Activated CD4-positive, alpha-beta T cell treated with anti-CD3 and anti-CD28 coated beads for 36 hours (primary cell): ENCODE measurements at regions of chr15 and their contacts with region 1.

Region 1: GRCh38 chr15:55434989-55435825 is 26.9 kb downstream of the PIERCE2 start:
- DNase-seq: peak; percentile 8
- ATAC-seq: peak; percentile 66
- H3K4me3 Mint-ChIP-seq: no peak overlapping the region
- H3K27ac Mint-ChIP-seq: no peak overlapping the region
- H3K4me1 Mint-ChIP-seq: peaks cover 3% of the 10 kb centered on the region
- H3K27me3 Mint-ChIP-seq: no peaks in the 10 kb centered on the region

Region 2: DNA sequence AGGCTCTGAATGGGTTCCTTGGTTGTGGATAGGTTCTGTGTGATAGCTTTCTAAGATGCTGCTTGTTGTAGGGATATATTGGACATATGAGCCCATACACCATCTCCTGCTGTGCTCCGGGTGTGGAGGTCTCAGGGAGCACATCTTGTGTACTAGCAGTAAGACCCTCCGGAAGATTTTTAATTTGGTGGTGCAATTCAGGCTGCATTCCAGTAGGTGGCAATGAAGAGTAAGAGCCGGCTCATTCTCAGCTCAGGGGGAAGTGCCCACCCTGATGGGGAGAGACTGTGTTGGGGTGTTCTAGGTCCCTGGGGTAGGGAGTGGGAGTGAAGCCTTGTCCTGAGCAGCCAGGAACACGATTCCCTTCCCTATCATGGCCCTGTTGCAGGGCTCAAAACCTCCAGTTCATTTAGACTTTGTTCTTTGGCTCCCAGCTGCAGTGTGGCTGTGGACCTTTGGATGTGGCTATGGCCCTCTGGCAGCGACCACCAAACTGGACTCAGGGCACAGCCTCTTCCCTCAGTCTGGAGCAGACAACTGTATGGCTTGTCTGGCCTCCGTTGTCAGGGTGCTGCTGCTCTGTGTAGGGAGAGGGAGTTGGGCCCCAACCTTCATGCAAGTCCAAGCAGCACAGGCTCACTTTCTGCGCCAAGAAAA is 1352.2 kb before region 1 on chr15:
- CTCF ChIA-PET with region 1: no interaction called
- POLR2A ChIA-PET with region 1: no interaction called
- intact Hi-C with region 1: loop called in 1 of 2 experiments (anchors 5 kb)
- DNase-seq: peak; percentile 20
- ATAC-seq: no peak
- H3K4me3 Mint-ChIP-seq: no peak overlapping the region
- H3K27ac Mint-ChIP-seq: no peak overlapping the region
- H3K4me1 Mint-ChIP-seq: no peaks in the 10 kb centered on the region
- H3K27me3 Mint-ChIP-seq: peaks cover 6% of the 10 kb centered on the region

Region 3: DNA sequence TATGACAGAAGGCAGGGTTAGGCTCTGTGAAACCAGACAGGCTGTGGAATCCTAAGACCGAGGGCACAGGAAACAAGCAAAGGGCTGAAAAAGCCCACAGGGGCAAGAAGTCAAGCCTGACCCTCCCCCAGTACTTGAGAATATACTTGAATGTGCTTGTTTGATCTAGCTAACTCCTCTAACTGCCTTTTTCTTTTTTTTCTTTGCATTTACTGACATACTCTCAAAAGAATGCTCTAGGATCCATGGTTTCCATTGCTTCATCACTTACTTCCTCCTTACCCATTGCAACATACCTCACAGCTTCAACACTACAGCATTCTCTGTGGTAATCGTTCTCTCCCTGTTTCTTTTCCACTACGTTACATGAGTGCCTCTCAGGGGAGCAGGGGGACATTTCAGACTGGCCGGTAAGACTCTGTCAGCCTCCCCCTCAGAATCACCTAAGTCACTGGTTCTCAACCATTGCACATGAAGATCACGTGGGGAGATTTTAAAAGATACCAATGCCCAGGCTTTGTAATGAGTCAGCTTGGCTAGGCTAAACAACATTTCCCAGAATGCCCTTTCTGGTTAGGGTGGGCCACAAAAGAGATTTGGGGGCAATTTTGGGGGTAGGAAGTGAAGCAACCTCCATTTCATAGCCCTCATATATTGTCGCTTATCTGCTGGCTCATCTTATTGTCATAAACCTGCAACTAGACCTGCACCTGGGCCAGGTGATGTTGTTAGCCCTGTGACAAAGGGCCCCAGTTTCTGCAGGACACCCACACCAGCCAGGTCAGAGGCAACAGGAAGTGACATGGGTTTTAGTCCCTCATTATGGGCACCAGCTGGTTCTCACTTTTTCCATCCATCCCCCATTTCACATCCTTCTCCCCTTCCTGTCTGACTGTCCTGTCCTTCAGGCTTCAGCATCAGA is 213.9 kb before region 1 on chr15:
- CTCF ChIA-PET with region 1: interaction called, 13 read pairs
- POLR2A ChIA-PET with region 1: no interaction called
- intact Hi-C with region 1: loop called (anchors 1 kb)
- DNase-seq: peak; percentile 60
- ATAC-seq: peak; percentile 59
- H3K4me3 Mint-ChIP-seq: no peak overlapping the region
- H3K27ac Mint-ChIP-seq: peak overlapping the region; percentile 88
- H3K4me1 Mint-ChIP-seq: peaks cover 65% of the 10 kb centered on the region
- H3K27me3 Mint-ChIP-seq: no peaks in the 10 kb centered on the region

Region 4: GRCh38 chr15:55407949-55408791 is 27.0 kb before region 1 on chr15 and contains the starts of genes CCPG1 and PIERCE2:
- CTCF ChIA-PET with region 1: interaction called, 24 read pairs
- POLR2A ChIA-PET with region 1: no interaction called
- intact Hi-C with region 1: loop called in 1 of 2 experiments (anchors 1 kb)
- DNase-seq: peak; percentile 95
- ATAC-seq: peak; percentile 93
- H3K4me3 Mint-ChIP-seq: peak within 1 kb of the TSS; percentile 87
- H3K27ac Mint-ChIP-seq: peak within 1 kb of the TSS; percentile 90
- H3K4me1 Mint-ChIP-seq: peaks cover 24% of the 10 kb centered on the region
- H3K27me3 Mint-ChIP-seq: no peaks in the 10 kb centered on the region
- total RNA-seq, gene CCPG1: 11.3 to 12.2 TPM
- total RNA-seq, gene PIERCE2: 0.34 to 0.81 TPM